Psoas muscle (tissue), 8 donors: ENCODE measurements at regions of chr1 and their contacts with region 1.

Region 1: DNA sequence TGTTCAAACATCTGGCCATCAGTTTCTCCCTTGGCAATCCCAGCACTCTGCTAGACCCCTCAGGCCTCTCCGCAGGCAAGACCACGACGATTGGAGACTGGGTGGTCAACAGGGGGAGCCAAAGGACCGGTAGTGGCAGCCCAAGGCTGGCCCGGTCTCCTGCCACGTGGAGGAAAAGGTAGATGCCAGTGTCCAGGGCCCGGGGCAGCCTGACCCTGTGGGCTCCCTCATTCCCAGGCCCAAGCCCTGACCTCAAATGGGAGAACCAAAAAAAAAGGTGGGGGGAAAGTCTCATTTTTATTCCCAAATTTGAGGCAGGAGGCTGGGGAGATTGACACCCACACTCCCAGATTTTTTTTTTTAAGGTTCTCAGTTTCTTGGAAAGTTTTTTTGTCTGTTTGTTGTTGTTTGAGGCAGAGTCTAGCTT is 24.8 kb downstream of the S100A6 start:
- DNase-seq: peak; percentile 82 to 89
- ATAC-seq: peak; percentile 82 to 88 (median 85)
- H3K4me3 ChIP-seq: no peak overlapping the region
- H3K27ac ChIP-seq: no peak overlapping the region
- H3K4me1 ChIP-seq: peaks cover 14% of the 10 kb centered on the region
- H3K27me3 ChIP-seq: no peaks in the 10 kb centered on the region
- CTCF ChIP-seq: peak; percentile 92

Region 2: GRCh38 chr1:153288634-153289275 is 222.2 kb before region 1 on chr1:
- intact Hi-C with region 1: no loop called
- DNase-seq: no peak
- ATAC-seq: no peak
- H3K4me3 ChIP-seq: no peak overlapping the region
- H3K27ac ChIP-seq: no peak overlapping the region
- H3K4me1 ChIP-seq: no peaks in the 10 kb centered on the region
- H3K27me3 ChIP-seq: peaks cover 0 to 25% (median 4%) of the 10 kb centered on the region in 3 donors
- CTCF ChIP-seq: no peak

Region 3: GRCh38 chr1:153566440-153567379 is 55.7 kb after region 1 on chr1:
- intact Hi-C with region 1: loop called (anchors 1 to 2 kb)
- DNase-seq: peak; percentile 96 to 98
- ATAC-seq: peak; percentile 93 to 95 (median 94)
- H3K4me3 ChIP-seq: no peak overlapping the region
- H3K27ac ChIP-seq: peak overlapping the region; percentile 88
- H3K4me1 ChIP-seq: peaks cover 32% of the 10 kb centered on the region
- H3K27me3 ChIP-seq: no peaks in the 10 kb centered on the region
- CTCF ChIP-seq: no peak

Region 4: GRCh38 chr1:153617675-153618074 is 106.7 kb after region 1 on chr1:
- intact Hi-C with region 1: loop called (anchors 5 kb)
- DNase-seq: peak; percentile 81 to 95
- ATAC-seq: peak; percentile 73 to 94 (median 80)
- H3K4me3 ChIP-seq: no peak overlapping the region
- H3K27ac ChIP-seq: peak overlapping the region; percentile 50
- H3K4me1 ChIP-seq: peaks cover 8% of the 10 kb centered on the region
- H3K27me3 ChIP-seq: no peaks in the 10 kb centered on the region
- CTCF ChIP-seq: peak; percentile 55

Region 5: GRCh38 chr1:153749408-153750005 is 238.5 kb after region 1 on chr1:
- intact Hi-C with region 1: loop called (anchors 5 to 10 kb)
- DNase-seq: peak; percentile 86 to 92
- ATAC-seq: peak; percentile 95 to 97 (median 97)
- H3K4me3 ChIP-seq: no peak overlapping the region
- H3K27ac ChIP-seq: peak overlapping the region; percentile 41
- H3K4me1 ChIP-seq: peaks cover 38% of the 10 kb centered on the region
- H3K27me3 ChIP-seq: no peaks in the 10 kb centered on the region
- CTCF ChIP-seq: peak; percentile 97

Region 6: DNA sequence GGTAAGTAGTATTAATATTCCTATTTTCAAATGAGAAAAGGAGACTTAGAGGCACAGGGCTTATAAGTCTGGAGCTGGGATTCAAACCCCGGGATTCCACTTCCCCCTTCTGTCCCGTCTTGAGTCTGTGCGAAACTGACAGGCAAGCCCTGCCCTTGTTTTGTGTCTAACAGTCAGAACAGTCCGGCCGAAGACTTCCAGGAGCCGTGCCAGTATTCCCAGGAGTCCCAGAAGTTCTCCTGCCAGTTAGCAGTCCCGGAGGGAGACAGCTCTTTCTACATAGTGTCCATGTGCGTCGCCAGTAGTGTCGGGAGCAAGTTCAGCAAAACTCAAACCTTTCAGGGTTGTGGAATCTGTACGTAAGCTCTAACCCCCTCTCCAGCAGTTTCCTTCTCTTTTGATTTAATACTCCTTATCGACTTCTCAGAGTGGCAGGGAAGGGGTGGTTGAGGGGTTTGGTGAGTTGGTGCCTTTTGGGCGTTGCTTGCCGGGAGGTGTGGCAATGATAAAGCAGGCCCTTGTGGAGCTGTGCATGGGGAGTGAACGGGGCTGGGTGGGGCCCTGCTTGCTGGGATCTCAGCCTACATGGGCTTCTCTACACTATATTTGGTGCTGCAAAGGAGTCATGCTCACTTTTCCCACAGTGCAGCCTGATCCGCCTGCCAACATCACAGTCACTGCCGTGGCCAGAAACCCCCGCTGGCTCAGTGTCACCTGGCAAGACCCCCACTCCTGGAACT is 923.5 kb after region 1 on chr1:
- intact Hi-C with region 1: loop called in 1 of 2 experiments (anchors 5 kb)
- DNase-seq: peak; percentile 69 to 89
- ATAC-seq: peak in 2 of 4 donors; percentile 31 to 39
- H3K4me3 ChIP-seq: peak overlapping the region; percentile 30
- H3K27ac ChIP-seq: peak overlapping the region; percentile 81
- H3K4me1 ChIP-seq: peaks cover 38% of the 10 kb centered on the region
- H3K27me3 ChIP-seq: no peaks in the 10 kb centered on the region
- CTCF ChIP-seq: no peak